BJ (cell line): ENCODE measurements at regions of chr6 and their contacts with region 1.

Region 1: GRCh38 chr6:133923938-133924593 is 29.0 kb upstream of the TBPL1 start:
- DNase-seq: peak; percentile 27
- H3K4me3 ChIP-seq: no peak overlapping the region
- H3K27me3 ChIP-seq: no peaks in the 10 kb centered on the region
- CTCF ChIP-seq: peak; percentile 77

Region 2: DNA sequence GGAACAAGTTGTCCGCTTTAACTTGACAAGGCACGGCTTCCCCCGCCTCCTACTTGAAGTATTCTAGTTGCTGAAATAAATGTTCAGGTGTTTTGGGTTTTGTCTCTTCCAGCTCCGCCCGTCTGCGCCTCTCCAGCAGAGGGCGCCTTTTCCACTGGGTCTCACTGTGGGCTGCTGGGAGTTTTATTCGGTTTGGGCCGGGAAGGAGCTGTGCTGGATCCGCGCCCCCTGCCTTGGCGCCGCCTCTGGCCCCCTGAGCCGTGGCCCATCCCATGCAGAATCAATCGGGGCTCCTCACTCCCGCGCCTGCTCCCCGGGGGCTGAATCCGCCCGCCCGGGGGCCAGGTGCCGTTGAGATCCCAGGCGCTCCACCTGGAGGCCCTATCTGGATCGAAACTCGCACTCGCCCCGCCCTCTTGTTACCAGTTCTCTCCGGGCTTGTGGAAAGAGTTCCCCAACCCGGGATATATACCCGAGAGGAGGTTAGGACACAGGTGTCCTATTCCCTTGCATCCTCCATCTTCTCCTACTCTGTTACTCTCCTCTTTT is 86.2 kb before region 1 on chr6:
- CTCF ChIA-PET with region 1: interaction called, 6 read pairs
- POLR2A ChIA-PET with region 1: interaction called, 38 read pairs
- DNase-seq: no peak
- H3K4me3 ChIP-seq: peak overlapping the region; percentile 32
- H3K27me3 ChIP-seq: no peaks in the 10 kb centered on the region
- CTCF ChIP-seq: peak; percentile 73

Region 3: GRCh38 chr6:133945158-133945557 is 21.1 kb after region 1 on chr6:
- CTCF ChIA-PET with region 1: interaction called, 17 read pairs
- POLR2A ChIA-PET with region 1: interaction called, 4 read pairs
- DNase-seq: no peak
- H3K4me3 ChIP-seq: no peak overlapping the region
- H3K27me3 ChIP-seq: peaks cover 1% of the 10 kb centered on the region
- CTCF ChIP-seq: no peak

Region 4: GRCh38 chr6:133973109-133973971 is 49.3 kb after region 1 on chr6:
- CTCF ChIA-PET with region 1: interaction called, 17 read pairs
- POLR2A ChIA-PET with region 1: no interaction called
- DNase-seq: no peak
- H3K4me3 ChIP-seq: no peak overlapping the region
- H3K27me3 ChIP-seq: no peaks in the 10 kb centered on the region
- CTCF ChIP-seq: peak; percentile 62

Region 5: GRCh38 chr6:134080171-134080795 is 156.2 kb after region 1 on chr6:
- CTCF ChIA-PET with region 1: interaction called, 15 read pairs
- POLR2A ChIA-PET with region 1: no interaction called
- DNase-seq: no peak
- H3K4me3 ChIP-seq: no peak overlapping the region
- H3K27me3 ChIP-seq: no peaks in the 10 kb centered on the region
- CTCF ChIP-seq: no peak